Dorsolateral prefrontal cortex (tissue), 120 donors: ENCODE measurements at regions of chr6 and their contacts with region 1.

Region 1: GRCh38 chr6:37691904-37692806 is 5.5 kb downstream of the MDGA1 start:
- DNase-seq: peak; percentile 65 to 89 (median 83)
- H3K4me3 ChIP-seq: peak overlapping the region in 2 of 59 donors; percentile 27 to 69
- H3K27ac ChIP-seq: peak overlapping the region in 38 of 59 donors; percentile 2 to 81 (median 52)
- H3K27me3 ChIP-seq: no peaks in the 10 kb centered on the region
- CTCF ChIP-seq: peak; percentile 79 to 99 (median 98)

Region 2: DNA sequence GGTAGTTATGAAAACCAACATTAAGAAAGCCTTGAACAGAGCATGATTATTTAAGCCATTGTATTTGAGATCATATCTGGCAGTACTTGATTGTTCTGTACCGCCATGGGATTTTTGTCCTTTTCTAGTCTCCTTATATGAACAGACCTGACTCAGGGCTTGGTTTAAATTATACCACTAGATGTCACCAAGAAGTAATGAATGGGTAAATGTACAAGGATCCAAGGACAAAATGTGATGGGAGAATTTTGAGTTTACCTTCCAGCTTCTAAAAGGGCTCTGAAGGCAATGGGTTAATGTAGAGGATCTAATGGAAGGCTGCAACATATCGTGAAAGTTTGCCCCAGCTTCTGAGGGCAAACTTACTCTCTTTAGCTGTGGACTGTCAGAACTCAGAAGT is 326.4 kb before region 1 on chr6:
- intact Hi-C with region 1: loop called in 1 of 2 experiments (anchors 5 kb)
- DNase-seq: no peak
- H3K4me3 ChIP-seq: no peak overlapping the region
- H3K27ac ChIP-seq: peak overlapping the region in 5 of 59 donors; percentile 4 to 41 (median 29)
- H3K27me3 ChIP-seq: no peaks in the 10 kb centered on the region
- CTCF ChIP-seq: peak in 52 of 56 donors; percentile 18 to 67 (median 44)

Region 3: GRCh38 chr6:37432916-37433656 is 259.1 kb before region 1 on chr6 and contains the start of gene CMTR1:
- intact Hi-C with region 1: loop called in 1 of 2 experiments (anchors 5 kb)
- DNase-seq: peak; percentile 85 to 95 (median 92)
- H3K4me3 ChIP-seq: peak within 1 kb of the TSS; percentile 60 to 98 (median 92)
- H3K27ac ChIP-seq: peak within 1 kb of the TSS; percentile 37 to 97 (median 90)
- H3K27me3 ChIP-seq: peaks cover 0 to 2% (median 0%) of the 10 kb centered on the region in 45 donors
- CTCF ChIP-seq: peak in 37 of 56 donors; percentile 11 to 57 (median 38)
- total RNA-seq, gene CMTR1: 39.1 to 69.9 (median 54.8) TPM

Region 4: GRCh38 chr6:37566111-37566949 is 125.8 kb before region 1 on chr6:
- intact Hi-C with region 1: loop called (anchors 1 to 5 kb)
- DNase-seq: peak; percentile 53 to 85 (median 62)
- H3K4me3 ChIP-seq: peak overlapping the region; percentile 30 to 71 (median 56)
- H3K27ac ChIP-seq: peak overlapping the region in 39 of 59 donors; percentile 9 to 82 (median 53)
- H3K27me3 ChIP-seq: no peaks in the 10 kb centered on the region
- CTCF ChIP-seq: peak; percentile 54 to 94 (median 86)

Region 5: DNA sequence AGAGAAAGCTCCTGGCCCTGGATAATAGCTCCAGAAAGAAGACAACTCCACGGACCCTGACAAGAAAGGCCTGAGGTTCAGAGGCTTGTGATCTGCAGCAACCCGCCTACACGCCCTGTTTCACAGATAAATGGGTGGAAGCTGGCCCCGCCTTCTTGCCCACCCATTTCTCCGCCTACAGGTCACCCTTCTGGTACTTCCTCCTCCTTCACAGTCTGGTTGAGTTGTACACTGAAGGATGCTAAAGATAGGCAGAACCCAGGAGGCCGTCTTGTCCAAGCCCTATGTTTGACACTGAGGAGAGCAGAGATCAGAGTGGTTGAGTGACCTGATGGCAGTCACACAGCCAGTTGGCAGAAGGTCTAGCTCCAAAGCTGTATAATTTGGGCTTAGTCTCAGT is 39.7 kb after region 1 on chr6:
- intact Hi-C with region 1: no loop called
- DNase-seq: no peak
- H3K4me3 ChIP-seq: no peak overlapping the region
- H3K27ac ChIP-seq: no peak overlapping the region
- H3K27me3 ChIP-seq: peaks cover 0 to 3% (median 0%) of the 10 kb centered on the region in 45 donors
- CTCF ChIP-seq: no peak